Common myeloid progenitor, CD34-positive (primary cell): ENCODE measurements at regions of chr1 and their contacts with region 1.

Region 1: DNA sequence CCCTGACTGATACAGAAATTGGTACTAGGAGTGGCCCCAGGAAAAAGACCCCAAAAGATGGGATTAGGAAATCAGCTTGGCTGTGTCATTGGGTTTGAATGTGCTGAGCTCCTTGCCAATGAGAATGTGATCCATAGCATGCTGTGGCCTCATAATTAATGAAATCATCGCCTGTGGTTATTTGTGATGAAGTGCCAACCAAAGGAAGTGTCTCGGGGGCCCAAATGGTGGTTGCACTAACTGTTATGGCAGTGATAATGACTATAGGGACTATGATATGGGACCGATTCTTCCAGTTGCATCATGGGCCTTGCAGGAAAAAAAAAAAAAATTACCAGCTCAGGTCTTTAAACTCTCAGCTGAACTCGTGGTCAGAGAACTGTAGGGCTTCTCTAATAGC is 15.4 kb upstream of the ZDHHC18 start:
- DNase-seq: peak in 1 of 3 donors; percentile 8
- H3K4me3 ChIP-seq: no peak overlapping the region
- H3K27ac ChIP-seq: no peak overlapping the region
- H3K4me1 ChIP-seq: peaks cover 0 to 4% (median 0%) of the 10 kb centered on the region in 4 experiments
- H3K27me3 ChIP-seq: no peaks in the 10 kb centered on the region

Region 2: DNA sequence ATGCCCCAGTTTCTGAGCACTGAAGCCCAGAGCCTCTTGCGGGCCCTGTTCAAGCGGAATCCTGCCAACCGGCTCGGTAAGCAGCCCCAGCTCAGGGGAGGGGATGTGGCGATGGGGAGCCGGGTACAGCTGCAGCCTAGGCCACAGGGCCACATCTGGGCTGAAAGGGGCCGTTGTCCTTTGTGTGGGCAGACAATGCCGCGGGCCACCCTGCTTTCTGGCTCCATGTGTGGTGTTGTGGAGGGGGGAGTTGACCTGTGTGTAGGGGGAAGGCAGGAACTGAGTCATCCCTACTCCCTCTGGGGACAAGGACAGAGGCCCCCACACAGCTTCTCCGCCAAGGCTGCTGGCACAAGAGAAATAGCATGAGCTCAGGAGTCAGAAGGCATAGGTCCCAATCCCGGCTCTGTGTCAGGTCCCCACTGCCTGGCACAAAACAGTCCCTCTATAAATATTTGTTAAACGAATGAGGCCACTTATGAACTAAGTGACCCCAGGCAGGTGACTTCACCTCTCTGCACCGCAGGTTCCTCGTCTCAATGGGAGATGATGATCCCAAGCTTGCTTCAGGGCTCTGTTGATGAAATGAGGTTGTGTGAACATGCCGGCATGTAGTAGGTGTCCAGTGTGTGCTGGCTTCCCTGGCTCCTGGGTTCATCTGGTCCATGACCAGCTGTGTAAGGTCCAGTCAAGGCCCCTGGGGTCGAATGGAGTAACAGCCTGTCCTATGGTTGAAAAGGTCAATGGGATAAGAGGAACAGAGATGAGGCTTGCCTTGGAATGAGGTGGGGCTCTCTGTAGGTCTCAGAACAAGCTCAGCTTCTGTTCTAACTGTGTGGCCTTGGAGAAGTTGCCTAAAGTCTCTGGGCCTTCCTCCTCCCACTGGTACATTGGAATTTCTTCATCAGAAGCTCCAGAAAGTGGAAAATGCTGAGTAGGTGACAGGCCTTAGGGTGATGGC is 255.2 kb before region 1 on chr1:
- CTCF ChIA-PET with region 1: no interaction called
- POLR2A ChIA-PET with region 1: no interaction called
- DNase-seq: no peak
- H3K4me3 ChIP-seq: no peak overlapping the region
- H3K27ac ChIP-seq: no peak overlapping the region
- H3K4me1 ChIP-seq: peaks cover 0 to 35% (median 0%) of the 10 kb centered on the region in 4 experiments
- H3K27me3 ChIP-seq: no peaks in the 10 kb centered on the region

Region 3: GRCh38 chr1:26614655-26615411 is 196.2 kb before region 1 on chr1:
- CTCF ChIA-PET with region 1: no interaction called
- POLR2A ChIA-PET with region 1: no interaction called
- DNase-seq: no peak
- H3K4me3 ChIP-seq: no peak overlapping the region
- H3K27ac ChIP-seq: no peak overlapping the region
- H3K4me1 ChIP-seq: peaks cover 13 to 17% (median 16%) of the 10 kb centered on the region in 4 experiments
- H3K27me3 ChIP-seq: no peaks in the 10 kb centered on the region

Region 4: DNA sequence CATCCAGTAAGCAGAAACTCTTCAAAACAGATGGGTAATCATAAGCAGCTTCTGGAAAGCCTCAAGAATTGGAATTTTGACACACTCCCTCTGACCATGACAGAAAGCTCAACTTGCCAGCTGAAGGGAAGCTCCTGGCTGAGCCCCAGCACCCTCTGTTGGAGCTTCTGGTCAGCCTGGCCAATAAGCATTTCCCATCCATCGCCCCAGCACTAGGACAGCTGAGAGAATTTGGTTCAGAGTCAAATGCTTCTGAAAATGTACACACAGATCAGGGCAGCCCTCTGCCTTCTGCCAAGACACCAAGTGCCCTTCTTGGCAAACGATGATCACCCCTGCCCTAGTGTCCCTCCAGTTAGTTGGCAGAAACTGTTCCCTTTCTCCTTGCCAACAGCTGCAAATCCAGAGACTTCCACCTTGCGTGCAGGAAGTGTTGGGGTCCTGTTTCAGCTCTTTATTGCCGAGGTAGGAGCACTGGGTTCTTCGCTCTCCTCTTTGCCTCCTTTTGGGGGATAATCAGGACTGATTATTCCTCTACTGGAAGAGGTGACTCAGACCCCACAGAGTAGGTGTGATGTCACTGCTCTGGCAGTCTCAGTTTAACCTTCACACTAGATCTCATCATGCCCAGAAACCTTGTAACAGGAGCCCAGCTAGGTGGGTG is 11.4 kb before region 1 on chr1:
- CTCF ChIA-PET with region 1: interaction called, 34 read pairs
- POLR2A ChIA-PET with region 1: no interaction called
- DNase-seq: peak in 1 of 3 donors; percentile 23
- H3K4me3 ChIP-seq: no peak overlapping the region
- H3K27ac ChIP-seq: peak overlapping the region in 1 of 2 experiments; percentile 51
- H3K4me1 ChIP-seq: peaks cover 4 to 19% (median 13%) of the 10 kb centered on the region in 4 experiments
- H3K27me3 ChIP-seq: no peaks in the 10 kb centered on the region

Region 5: GRCh38 chr1:26833432-26834405 is 22.7 kb after region 1 on chr1:
- CTCF ChIA-PET with region 1: interaction called, 90 read pairs
- POLR2A ChIA-PET with region 1: interaction called, 5 read pairs
- DNase-seq: peak; percentile 96 to 99 (median 97)
- H3K4me3 ChIP-seq: peak overlapping the region in 4 of 7 experiments; percentile 21 to 53 (median 36)
- H3K27ac ChIP-seq: peak overlapping the region; percentile 70 to 85
- H3K4me1 ChIP-seq: peaks cover 13 to 48% (median 33%) of the 10 kb centered on the region in 4 experiments
- H3K27me3 ChIP-seq: no peaks in the 10 kb centered on the region

Region 6: DNA sequence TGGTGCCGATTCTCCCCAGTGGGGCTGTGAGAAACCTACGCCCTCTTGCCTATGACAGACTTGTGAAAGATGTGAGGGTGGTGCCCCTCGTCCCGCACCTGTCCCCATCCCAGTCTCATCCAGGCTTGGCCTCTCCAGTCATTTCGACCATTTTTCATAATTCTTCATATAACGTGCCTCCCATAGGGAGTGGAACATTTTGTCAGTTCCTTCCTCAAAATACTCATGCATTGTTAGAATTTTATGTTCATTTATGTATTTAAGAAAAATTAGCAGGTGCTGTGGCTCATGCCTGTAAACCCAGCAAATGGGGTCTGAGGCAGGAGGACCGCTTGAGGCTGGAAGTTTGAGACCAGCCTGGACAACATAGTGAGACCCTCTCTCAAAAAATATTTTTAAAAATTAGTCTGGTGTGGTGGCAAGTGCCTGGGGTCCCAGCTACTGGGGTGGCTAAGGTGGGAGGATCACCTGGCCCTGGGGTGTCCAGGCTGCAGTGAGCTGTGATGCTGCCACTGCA is 1104.1 kb after region 1 on chr1:
- CTCF ChIA-PET with region 1: no interaction called
- POLR2A ChIA-PET with region 1: no interaction called
- DNase-seq: no peak
- H3K4me3 ChIP-seq: peak overlapping the region in 3 of 7 experiments; percentile 7 to 89 (median 37)
- H3K27ac ChIP-seq: peak overlapping the region in 1 of 2 experiments; percentile 91
- H3K4me1 ChIP-seq: peaks cover 0 to 8% (median 7%) of the 10 kb centered on the region in 4 experiments
- H3K27me3 ChIP-seq: no peaks in the 10 kb centered on the region